ENCODE measurements at regions of chr3 and their contacts with region 1.

Region 1: DNA sequence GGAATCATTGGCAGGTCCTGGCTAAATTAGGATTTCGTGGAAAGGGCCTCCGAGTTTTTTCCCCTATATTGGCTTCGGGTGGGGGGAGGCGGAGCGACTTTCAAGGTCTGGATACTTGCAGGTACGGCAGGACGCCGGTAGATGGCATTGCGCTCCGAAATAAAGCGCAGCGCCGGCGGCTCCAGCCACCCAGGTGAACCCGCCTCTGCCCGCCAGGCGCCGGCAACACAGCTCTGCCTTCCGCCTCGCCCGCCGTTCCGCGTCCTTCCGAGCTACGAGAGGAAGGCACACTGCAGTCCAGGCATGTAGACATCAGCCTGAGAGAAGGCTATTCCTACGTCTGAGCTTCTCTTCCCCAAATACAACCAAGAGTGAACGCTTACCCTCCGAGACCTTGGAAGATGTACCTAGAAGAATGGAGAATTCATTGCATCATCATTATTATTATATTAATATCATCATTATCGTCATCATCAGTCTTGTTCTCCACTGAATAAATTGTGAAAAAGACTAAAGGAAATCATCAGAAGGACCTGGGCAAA is 514.1 kb downstream of the MECOM start:
- DNase-seq: peak; percentile 92
- ATAC-seq: peak; percentile 76
- H3K4me3 ChIP-seq: peak overlapping the region; percentile 73
- H3K27ac ChIP-seq: peak overlapping the region; percentile 12
- H3K4me1 ChIP-seq: peaks cover 33% of the 10 kb centered on the region
- H3K27me3 ChIP-seq: no peaks in the 10 kb centered on the region
- CTCF ChIP-seq: peak; percentile 87

Region 2: GRCh38 chr3:168952551-168952950 is 196.9 kb before region 1 on chr3:
- CTCF ChIA-PET with region 1: interaction called, 6 read pairs
- POLR2A ChIA-PET with region 1: no interaction called
- intact Hi-C with region 1: loop called (anchors 5 kb)
- DNase-seq: peak; percentile 73
- ATAC-seq: peak; percentile 47
- H3K4me3 ChIP-seq: no peak overlapping the region
- H3K27ac ChIP-seq: peak overlapping the region; percentile 89
- H3K4me1 ChIP-seq: peaks cover 34% of the 10 kb centered on the region
- H3K27me3 ChIP-seq: no peaks in the 10 kb centered on the region
- CTCF ChIP-seq: peak; percentile 73

Region 3: DNA sequence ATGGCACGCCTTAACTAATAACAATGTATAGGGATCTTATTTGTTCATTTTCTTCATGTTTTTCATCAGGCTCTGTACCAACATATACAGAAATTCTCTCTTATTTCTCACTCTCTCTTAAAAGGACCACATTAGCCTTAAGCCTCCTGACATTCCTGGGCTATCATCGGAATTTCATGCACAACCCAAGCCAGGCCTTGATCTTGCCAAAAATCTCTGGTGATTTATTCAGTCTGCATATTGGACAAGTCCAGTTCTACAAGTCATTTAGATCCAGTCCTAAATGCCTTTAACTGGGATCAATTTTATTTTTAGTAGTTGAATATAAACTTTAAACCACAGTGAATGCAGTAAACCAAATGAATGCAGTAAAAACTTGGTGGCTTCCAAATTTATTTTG is 128.7 kb after region 1 on chr3:
- CTCF ChIA-PET with region 1: interaction called, 13 read pairs
- POLR2A ChIA-PET with region 1: interaction called, 4 read pairs
- intact Hi-C with region 1: loop called (anchors 2 kb)
- DNase-seq: no peak
- ATAC-seq: no peak
- H3K4me3 ChIP-seq: no peak overlapping the region
- H3K27ac ChIP-seq: no peak overlapping the region
- H3K4me1 ChIP-seq: peaks cover 29% of the 10 kb centered on the region
- H3K27me3 ChIP-seq: no peaks in the 10 kb centered on the region
- CTCF ChIP-seq: no peak

Region 4: DNA sequence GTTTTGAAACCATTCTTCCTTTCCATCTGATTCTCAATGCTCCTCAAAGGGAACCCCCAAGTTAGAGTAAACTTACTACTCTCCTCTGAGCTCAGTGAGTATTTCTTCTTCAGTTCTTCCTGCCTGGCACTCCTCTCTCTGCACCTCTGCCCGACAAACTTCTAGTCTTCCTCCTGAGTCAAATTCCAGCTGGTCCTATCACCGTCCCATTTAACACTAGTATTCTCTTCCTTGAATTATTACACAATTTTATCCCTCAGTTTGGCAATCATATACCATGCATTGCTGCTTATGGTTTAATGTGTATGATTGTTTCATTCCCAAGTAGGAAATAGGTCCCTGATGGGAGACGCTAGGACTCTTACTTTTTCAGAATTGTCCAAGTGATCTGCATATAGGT is 234.3 kb after region 1 on chr3:
- CTCF ChIA-PET with region 1: interaction called, 10 read pairs
- POLR2A ChIA-PET with region 1: no interaction called
- intact Hi-C with region 1: no loop called
- DNase-seq: no peak
- ATAC-seq: no peak
- H3K4me3 ChIP-seq: no peak overlapping the region
- H3K27ac ChIP-seq: no peak overlapping the region
- H3K4me1 ChIP-seq: no peaks in the 10 kb centered on the region
- H3K27me3 ChIP-seq: no peaks in the 10 kb centered on the region
- CTCF ChIP-seq: no peak

Region 5: DNA sequence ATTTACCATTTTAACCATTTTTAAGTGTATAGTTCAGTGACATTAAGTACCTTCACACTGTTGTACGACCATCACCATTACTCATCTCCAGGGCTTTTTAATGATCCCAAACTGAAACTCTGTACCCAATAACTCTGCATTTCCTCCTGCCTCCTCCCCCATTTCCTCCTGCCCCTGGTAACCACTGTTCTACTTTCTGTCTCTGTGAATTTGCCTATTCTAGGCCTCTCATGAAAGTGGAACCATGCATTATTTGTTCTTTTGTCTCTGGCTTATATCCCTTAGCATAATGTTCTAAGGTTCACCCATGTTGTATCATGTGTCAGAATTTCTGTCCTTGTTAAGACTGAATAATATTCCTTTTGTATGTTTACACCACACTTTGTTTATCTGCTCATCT is 359.9 kb after region 1 on chr3:
- CTCF ChIA-PET with region 1: no interaction called
- POLR2A ChIA-PET with region 1: no interaction called
- intact Hi-C with region 1: loop called (anchors 5 kb)
- DNase-seq: no peak
- ATAC-seq: no peak; the same call in 1 of the 2 replicates
- H3K4me3 ChIP-seq: no peak overlapping the region
- H3K27ac ChIP-seq: no peak overlapping the region
- H3K4me1 ChIP-seq: no peaks in the 10 kb centered on the region
- H3K27me3 ChIP-seq: no peaks in the 10 kb centered on the region
- CTCF ChIP-seq: no peak

Region 6: GRCh38 chr3:169668957-169669681 is 519.7 kb after region 1 on chr3:
- CTCF ChIA-PET with region 1: interaction called, 33 read pairs
- POLR2A ChIA-PET with region 1: interaction called, 11 read pairs
- intact Hi-C with region 1: loop called (anchors 1 kb)
- DNase-seq: peak; percentile 86
- ATAC-seq: peak; percentile 91
- H3K4me3 ChIP-seq: peak overlapping the region; percentile 75
- H3K27ac ChIP-seq: no peak overlapping the region
- H3K4me1 ChIP-seq: peaks cover 6% of the 10 kb centered on the region; the same call in 1 of the 2 replicates
- H3K27me3 ChIP-seq: no peaks in the 10 kb centered on the region
- CTCF ChIP-seq: peak; percentile 94

Measured in PC-3 (cell line).